ENCODE measurements at regions of chr17 and their contacts with region 1.

Region 1: GRCh38 chr17:55527540-55528118 is 16.4 kb upstream of the SMIM36 start:
- DNase-seq: no peak
- ATAC-seq: peak; percentile 84
- H3K4me3 ChIP-seq: no peak overlapping the region
- H3K27ac ChIP-seq: no peak overlapping the region
- H3K4me1 ChIP-seq: no peaks in the 10 kb centered on the region
- H3K27me3 ChIP-seq: peaks cover 0 to 2% of the 10 kb centered on the region in 2 donors

Region 2: GRCh38 chr17:55067697-55068439 is 459.8 kb before region 1 on chr17:
- intact Hi-C with region 1: no loop called
- DNase-seq: no peak
- ATAC-seq: no peak
- H3K4me3 ChIP-seq: no peak overlapping the region
- H3K27ac ChIP-seq: no peak overlapping the region
- H3K4me1 ChIP-seq: no peaks in the 10 kb centered on the region
- H3K27me3 ChIP-seq: no peaks in the 10 kb centered on the region

Region 3: GRCh38 chr17:55717898-55718735 is 190.5 kb after region 1 on chr17:
- intact Hi-C with region 1: loop called (anchors 5 kb)
- DNase-seq: peak; percentile 79 to 90
- ATAC-seq: peak; percentile 76
- H3K4me3 ChIP-seq: no peak overlapping the region
- H3K27ac ChIP-seq: no peak overlapping the region
- H3K4me1 ChIP-seq: no peaks in the 10 kb centered on the region
- H3K27me3 ChIP-seq: no peaks in the 10 kb centered on the region

Region 4: DNA sequence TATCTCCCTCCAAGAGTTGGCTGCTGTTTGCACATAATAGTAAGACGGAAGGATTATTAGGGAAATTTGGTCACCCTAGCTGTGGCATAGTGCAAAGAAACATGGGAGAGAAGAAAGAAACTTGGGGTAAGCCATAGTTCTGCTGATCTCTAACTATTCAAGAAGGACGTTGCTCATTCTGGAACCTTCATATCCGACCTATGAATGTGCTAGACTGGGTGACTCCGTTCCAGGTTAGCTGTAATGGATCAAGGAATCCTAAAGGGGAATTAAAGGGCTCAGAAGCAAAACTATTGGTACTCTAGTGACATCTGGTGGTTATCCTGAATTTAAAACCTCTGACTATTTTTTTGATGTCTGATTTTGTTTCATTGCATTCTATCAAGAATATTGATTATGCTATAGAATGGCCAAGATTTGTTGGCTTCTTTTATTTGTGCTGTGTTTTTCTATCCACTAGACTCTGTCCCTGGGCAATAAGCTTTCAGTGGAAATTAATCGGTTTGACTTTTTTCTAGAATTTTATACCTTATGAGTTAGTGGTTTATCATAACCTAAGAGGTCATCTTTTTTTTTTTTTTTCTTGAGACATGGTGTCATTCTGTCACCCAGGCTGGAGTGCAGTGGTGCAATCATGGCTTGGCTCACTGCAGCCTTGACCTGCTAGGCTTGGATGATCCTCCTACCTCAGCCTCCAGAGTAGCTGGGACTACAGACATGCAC is 242.7 kb after region 1 on chr17:
- intact Hi-C with region 1: loop called (anchors 2 to 5 kb)
- DNase-seq: no peak
- ATAC-seq: peak; percentile 82
- H3K4me3 ChIP-seq: no peak overlapping the region
- H3K27ac ChIP-seq: no peak overlapping the region
- H3K4me1 ChIP-seq: no peaks in the 10 kb centered on the region
- H3K27me3 ChIP-seq: no peaks in the 10 kb centered on the region

Measured in aorta (tissue), 5 donors.